ENCODE measurements at regions of chr6 and their contacts with region 1.

Region 1: DNA sequence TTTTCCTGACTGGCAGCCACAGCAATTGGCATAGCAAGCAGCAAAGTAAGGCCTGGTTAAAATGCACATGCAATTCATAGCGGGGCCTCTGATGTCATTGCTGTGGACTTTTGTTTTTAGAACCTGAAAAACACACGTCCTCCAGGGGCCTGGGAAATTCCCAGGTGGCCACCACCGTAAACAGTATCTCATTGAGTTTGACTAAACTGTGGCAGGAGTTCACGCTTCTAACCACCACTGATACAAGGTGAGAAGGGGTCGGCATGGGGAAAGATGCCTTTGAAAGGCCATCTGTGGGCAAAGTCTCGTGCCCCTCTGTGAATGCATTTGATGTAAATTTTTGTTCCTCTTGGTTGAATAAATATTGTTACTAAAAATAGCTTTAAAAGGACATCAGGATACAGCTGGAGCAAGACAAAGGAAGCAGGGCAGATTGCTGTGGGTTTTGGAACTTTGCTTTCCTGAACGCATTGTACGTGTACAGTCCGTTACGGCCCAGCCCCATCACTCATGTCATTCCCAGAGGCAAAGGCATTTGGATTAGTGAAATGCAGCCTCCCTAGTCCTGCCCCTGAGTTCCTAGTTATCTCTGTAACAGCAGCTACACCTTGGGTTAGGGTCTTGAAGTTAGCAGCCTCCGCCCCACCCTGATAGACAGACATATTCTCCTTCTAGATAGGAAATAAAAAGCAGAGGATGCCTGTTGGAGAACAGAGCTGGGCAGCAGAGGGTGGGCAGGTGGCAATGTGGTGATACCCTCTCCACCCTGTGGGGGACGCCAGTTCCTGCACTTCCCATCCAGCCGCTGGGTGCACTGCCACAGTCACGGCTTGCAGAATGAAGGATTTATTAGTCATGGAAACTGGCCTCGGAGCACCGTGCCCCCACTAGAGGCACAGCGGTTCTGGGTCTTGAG is 80.3 kb downstream of the ZDHHC14 start:
- DNase-seq: peak; percentile 92
- ATAC-seq: peak; percentile 69
- H3K4me3 ChIP-seq: no peak overlapping the region
- H3K27ac ChIP-seq: peak overlapping the region; percentile 44; the same call in 1 of the 2 replicates
- H3K4me1 ChIP-seq: peaks cover 40% of the 10 kb centered on the region
- H3K27me3 ChIP-seq: no peaks in the 10 kb centered on the region
- CTCF ChIP-seq: peak; percentile 41 to 58 (median 46); a peak in 5 of 6 replicates
- EP300 ChIP-seq: peak; percentile 97 to 98
- POLR2A ChIP-seq: no peak
- RAD21 ChIP-seq: peak; percentile 15; the same call in 1 of the 2 replicates

Region 2: DNA sequence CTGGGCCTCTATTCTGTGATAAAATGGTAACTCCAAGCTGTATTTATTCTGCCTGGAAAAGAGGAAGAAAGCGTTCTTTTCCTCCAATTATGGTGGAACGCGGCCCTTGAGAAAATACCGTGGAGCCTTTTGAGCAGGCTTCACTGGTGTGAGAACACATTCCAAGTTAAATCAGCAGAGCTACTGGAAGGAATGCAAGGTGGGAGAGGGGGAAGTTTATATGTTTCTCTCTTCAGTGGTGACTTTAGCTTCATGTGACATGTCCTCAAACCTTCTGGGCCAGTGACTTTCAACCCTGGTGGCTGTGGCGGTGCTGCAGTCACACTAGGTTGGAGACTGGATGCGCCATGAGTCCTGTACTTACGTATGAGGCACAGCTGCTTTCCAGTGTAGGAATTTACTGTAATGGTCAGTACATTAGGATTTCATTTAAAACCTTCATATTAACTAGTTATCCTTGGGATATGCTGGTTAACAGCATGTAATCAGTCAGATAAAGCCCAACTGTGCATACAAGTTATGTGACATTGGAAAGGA is 462.4 kb before region 1 on chr6:
- CTCF ChIA-PET with region 1: no interaction called
- POLR2A ChIA-PET with region 1: no interaction called
- RAD21 ChIA-PET with region 1: no interaction called
- SMC1A ChIA-PET with region 1: no interaction called
- in situ Hi-C with region 1: no loop called
- intact Hi-C with region 1: no loop called
- DNase-seq: no peak
- ATAC-seq: no peak
- H3K4me3 ChIP-seq: no peak overlapping the region
- H3K27ac ChIP-seq: no peak overlapping the region
- H3K4me1 ChIP-seq: no peaks in the 10 kb centered on the region
- H3K27me3 ChIP-seq: no peaks in the 10 kb centered on the region
- CTCF ChIP-seq: no peak
- EP300 ChIP-seq: no peak
- POLR2A ChIP-seq: no peak
- RAD21 ChIP-seq: no peak

Region 3: GRCh38 chr6:157314705-157315321 is 146.4 kb before region 1 on chr6:
- CTCF ChIA-PET with region 1: interaction called, 28 read pairs
- POLR2A ChIA-PET with region 1: interaction called, 3 read pairs
- RAD21 ChIA-PET with region 1: interaction called, 10 read pairs
- SMC1A ChIA-PET with region 1: interaction called, 21 read pairs
- in situ Hi-C with region 1: loop called (anchors 5 kb)
- intact Hi-C with region 1: loop called (anchors 2 kb)
- DNase-seq: peak; percentile 42
- ATAC-seq: peak; percentile 96
- H3K4me3 ChIP-seq: no peak overlapping the region
- H3K27ac ChIP-seq: no peak overlapping the region
- H3K4me1 ChIP-seq: no peaks in the 10 kb centered on the region
- H3K27me3 ChIP-seq: no peaks in the 10 kb centered on the region
- CTCF ChIP-seq: peak; percentile 80 to 100 (median 91); a peak in 5 of 6 replicates
- EP300 ChIP-seq: no peak
- POLR2A ChIP-seq: no peak
- RAD21 ChIP-seq: peak; percentile 99

Region 4: GRCh38 chr6:157368359-157369049 is 92.8 kb before region 1 on chr6:
- CTCF ChIA-PET with region 1: interaction called, 4 read pairs
- POLR2A ChIA-PET with region 1: interaction called, 3 read pairs
- RAD21 ChIA-PET with region 1: interaction called, 10 read pairs
- SMC1A ChIA-PET with region 1: interaction called, 5 read pairs
- in situ Hi-C with region 1: no loop called
- intact Hi-C with region 1: loop called (anchors 5 kb)
- DNase-seq: no peak
- ATAC-seq: peak; percentile 49
- H3K4me3 ChIP-seq: no peak overlapping the region
- H3K27ac ChIP-seq: no peak overlapping the region
- H3K4me1 ChIP-seq: peaks cover 15% of the 10 kb centered on the region
- H3K27me3 ChIP-seq: peaks cover 0 to 12% of the 10 kb centered on the region in 2 experiments; a peak in 3 of 4 replicates
- CTCF ChIP-seq: no peak
- EP300 ChIP-seq: no peak
- POLR2A ChIP-seq: no peak
- RAD21 ChIP-seq: no peak

Region 5: DNA sequence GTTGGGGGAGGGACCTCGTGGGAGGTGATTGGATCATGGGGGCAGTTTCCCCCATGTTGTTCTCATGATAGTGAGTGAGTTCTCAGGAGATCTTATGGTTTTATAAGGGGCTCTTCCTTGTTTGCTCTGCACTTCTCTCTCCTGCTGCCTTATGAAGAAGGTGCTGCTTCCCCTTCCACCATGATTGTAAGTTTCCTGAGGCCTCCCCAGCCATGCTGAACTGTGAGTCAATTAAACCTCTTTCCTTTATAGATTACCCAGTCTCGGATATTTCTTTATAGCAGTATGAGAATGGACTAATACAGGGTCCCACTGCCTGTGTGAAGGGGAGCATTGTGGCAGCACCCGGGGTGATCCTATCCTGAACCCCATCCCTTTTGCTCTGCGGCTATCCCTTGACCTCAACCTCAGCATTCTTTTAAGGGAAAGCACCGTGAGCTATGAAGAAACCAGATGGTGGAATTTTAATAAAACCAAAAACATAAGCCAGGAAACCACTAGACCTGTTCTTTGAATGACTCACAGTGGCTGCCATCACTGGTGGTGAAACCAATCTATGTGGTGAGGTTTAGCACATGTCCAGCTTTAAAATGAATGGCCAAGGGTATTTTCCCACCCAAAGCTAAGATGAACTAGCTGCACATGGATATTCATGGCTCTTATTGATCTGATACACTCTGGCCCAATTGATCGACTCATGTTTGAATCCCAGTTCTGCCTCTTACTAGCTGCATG is 18.0 kb before region 1 on chr6:
- CTCF ChIA-PET with region 1: interaction called, 4 read pairs
- POLR2A ChIA-PET with region 1: interaction called, 5 read pairs
- RAD21 ChIA-PET with region 1: interaction called, 10 read pairs
- SMC1A ChIA-PET with region 1: interaction called, 88 read pairs
- in situ Hi-C with region 1: no loop called
- intact Hi-C with region 1: loop called (anchors 1 kb)
- DNase-seq: peak; percentile 80
- ATAC-seq: peak; percentile 97
- H3K4me3 ChIP-seq: no peak overlapping the region
- H3K27ac ChIP-seq: no peak overlapping the region
- H3K4me1 ChIP-seq: 0 out of 2 replicates have a peak, but pooled peaks cover 3% of the 10 kb centered on the region
- H3K27me3 ChIP-seq: no peaks in the 10 kb centered on the region
- CTCF ChIP-seq: no peak
- EP300 ChIP-seq: peak; percentile 84 to 87
- POLR2A ChIP-seq: no peak
- RAD21 ChIP-seq: no peak

Region 6: DNA sequence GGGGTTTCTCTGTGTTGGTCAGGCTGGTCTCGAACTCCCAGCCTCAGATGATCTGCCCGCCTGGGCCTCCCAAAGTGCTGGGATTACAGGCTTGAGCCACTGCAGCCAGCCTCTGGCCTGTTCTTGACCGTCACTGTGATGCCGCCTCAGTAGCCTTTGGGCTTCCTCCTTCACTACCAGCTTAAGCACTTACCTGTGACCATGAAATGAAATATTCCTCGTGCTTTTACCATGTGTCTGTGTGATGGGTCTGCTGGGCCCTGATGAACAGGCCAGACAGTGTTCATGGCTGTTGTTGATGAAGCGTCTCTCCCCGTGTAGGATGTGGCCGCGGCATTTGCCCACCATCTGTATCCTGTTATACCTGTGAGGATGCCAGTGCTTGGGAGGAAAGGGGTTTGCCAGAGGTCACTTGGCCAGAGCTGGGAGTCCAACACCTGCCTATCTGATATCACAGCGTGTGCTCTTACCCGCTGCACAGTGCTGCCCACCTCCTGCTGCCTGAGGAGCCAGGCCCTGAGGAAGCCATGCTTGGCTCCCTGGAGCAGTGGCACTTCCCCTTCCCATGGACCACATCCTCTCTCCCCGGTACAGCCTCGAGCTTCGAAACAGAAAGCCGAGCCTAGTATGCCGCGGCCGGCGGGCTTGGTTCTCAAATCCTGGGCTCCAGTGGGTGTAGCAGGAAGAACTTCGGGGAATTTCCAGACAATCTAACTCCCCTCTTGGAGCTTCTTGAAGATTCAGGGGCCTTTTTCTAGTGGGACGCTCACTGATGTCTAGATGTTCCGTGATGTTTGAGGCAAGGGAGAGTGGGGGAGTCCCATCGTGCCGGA is 87.6 kb after region 1 on chr6:
- CTCF ChIA-PET with region 1: no interaction called
- POLR2A ChIA-PET with region 1: no interaction called
- RAD21 ChIA-PET with region 1: interaction called, 12 read pairs
- SMC1A ChIA-PET with region 1: interaction called, 4 read pairs
- in situ Hi-C with region 1: no loop called
- intact Hi-C with region 1: no loop called
- DNase-seq: no peak
- ATAC-seq: peak; percentile 67
- H3K4me3 ChIP-seq: no peak overlapping the region
- H3K27ac ChIP-seq: no peak overlapping the region
- H3K4me1 ChIP-seq: no peaks in the 10 kb centered on the region
- H3K27me3 ChIP-seq: no peaks in the 10 kb centered on the region
- CTCF ChIP-seq: no peak
- EP300 ChIP-seq: no peak
- POLR2A ChIP-seq: no peak
- RAD21 ChIP-seq: no peak

Region 7: GRCh38 chr6:157597446-157598312 is 136.4 kb after region 1 on chr6:
- CTCF ChIA-PET with region 1: interaction called, 32 read pairs
- POLR2A ChIA-PET with region 1: interaction called, 4 read pairs
- RAD21 ChIA-PET with region 1: interaction called, 56 read pairs
- SMC1A ChIA-PET with region 1: interaction called, 28 read pairs
- in situ Hi-C with region 1: no loop called
- intact Hi-C with region 1: loop called (anchors 1 kb)
- DNase-seq: no peak
- ATAC-seq: peak; percentile 91
- H3K4me3 ChIP-seq: no peak overlapping the region
- H3K27ac ChIP-seq: no peak overlapping the region
- H3K4me1 ChIP-seq: no peaks in the 10 kb centered on the region; the same call in 1 of the 2 replicates
- H3K27me3 ChIP-seq: no peaks in the 10 kb centered on the region
- CTCF ChIP-seq: peak; percentile 51 to 72 (median 56); a peak in 5 of 6 replicates
- EP300 ChIP-seq: no peak
- POLR2A ChIP-seq: no peak
- RAD21 ChIP-seq: peak; percentile 75

Region 8: GRCh38 chr6:157764178-157765033 is 303.1 kb after region 1 on chr6:
- CTCF ChIA-PET with region 1: interaction called, 4 read pairs
- POLR2A ChIA-PET with region 1: no interaction called
- RAD21 ChIA-PET with region 1: interaction called, 6 read pairs
- SMC1A ChIA-PET with region 1: interaction called, 5 read pairs
- in situ Hi-C with region 1: no loop called
- intact Hi-C with region 1: loop called (anchors 1 kb)
- DNase-seq: peak; percentile 95
- ATAC-seq: peak; percentile 68
- H3K4me3 ChIP-seq: peak overlapping the region; percentile 53; the same call in 1 of the 2 replicates
- H3K27ac ChIP-seq: peak overlapping the region; percentile 76
- H3K4me1 ChIP-seq: peaks cover 72% of the 10 kb centered on the region
- H3K27me3 ChIP-seq: no peaks in the 10 kb centered on the region
- CTCF ChIP-seq: no peak
- EP300 ChIP-seq: peak; percentile 96 to 97
- POLR2A ChIP-seq: no peak
- RAD21 ChIP-seq: 0 out of 2 replicates have a peak, but pooled peaks have one; percentile 2

Measured in GM12878 (cell line).